Activated T-helper 1 cell treated with anti-CD3 and anti-CD28 coated beads, Interleukin-12 subunit alpha, Interleukin-12 subunit beta, Interleukin-2, Interleukin-4 antibody, amounts not matched to agents 30 ng/mL and 10 ng/mL and 1 ng/mL, durations not matched to agents 14 hours and 24 hours and 36 hours (primary cell): ENCODE measurements at regions of chr1 and their contacts with region 1.

Region 1: GRCh38 chr1:226940029-226940805 is at the start of gene COQ8A:
- DNase-seq: peak; percentile 100
- H3K4me3 Mint-ChIP-seq: peak within 1 kb of the TSS; percentile 89
- H3K27ac Mint-ChIP-seq: peak within 1 kb of the TSS; percentile 97
- H3K4me1 Mint-ChIP-seq: peaks cover 41% of the 10 kb centered on the region
- H3K27me3 Mint-ChIP-seq: no peaks in the 10 kb centered on the region
- total RNA-seq, gene COQ8A: 33.1 and 33.8 TPM in 2 replicates

Region 2: DNA sequence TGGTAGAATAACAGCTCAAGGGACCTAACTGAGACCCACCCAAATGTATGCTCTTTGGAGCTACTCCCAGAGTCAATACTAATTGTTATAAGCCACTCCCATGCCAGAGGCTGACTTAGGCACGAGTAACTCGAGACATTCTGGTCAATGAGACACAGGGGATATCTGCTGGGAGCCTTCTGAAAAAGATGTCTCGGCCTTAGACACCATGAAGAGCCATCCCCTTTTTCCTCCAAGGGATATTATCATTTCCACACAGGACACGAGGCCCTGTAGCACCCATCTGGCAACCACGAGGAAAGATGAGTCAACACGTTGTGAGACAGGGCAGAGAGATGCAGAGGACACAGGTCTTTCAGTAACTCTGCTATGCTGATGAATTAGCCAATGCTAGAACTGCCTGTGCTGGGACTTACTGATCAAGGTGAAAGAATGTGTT is 231.9 kb before region 1 on chr1:
- intact Hi-C with region 1: loop called (anchors 5 kb)
- DNase-seq: no peak
- H3K4me3 Mint-ChIP-seq: peak overlapping the region; percentile 59
- H3K27ac Mint-ChIP-seq: peak overlapping the region; percentile 94
- H3K4me1 Mint-ChIP-seq: peaks cover 72% of the 10 kb centered on the region
- H3K27me3 Mint-ChIP-seq: peaks cover 1% of the 10 kb centered on the region

Region 3: DNA sequence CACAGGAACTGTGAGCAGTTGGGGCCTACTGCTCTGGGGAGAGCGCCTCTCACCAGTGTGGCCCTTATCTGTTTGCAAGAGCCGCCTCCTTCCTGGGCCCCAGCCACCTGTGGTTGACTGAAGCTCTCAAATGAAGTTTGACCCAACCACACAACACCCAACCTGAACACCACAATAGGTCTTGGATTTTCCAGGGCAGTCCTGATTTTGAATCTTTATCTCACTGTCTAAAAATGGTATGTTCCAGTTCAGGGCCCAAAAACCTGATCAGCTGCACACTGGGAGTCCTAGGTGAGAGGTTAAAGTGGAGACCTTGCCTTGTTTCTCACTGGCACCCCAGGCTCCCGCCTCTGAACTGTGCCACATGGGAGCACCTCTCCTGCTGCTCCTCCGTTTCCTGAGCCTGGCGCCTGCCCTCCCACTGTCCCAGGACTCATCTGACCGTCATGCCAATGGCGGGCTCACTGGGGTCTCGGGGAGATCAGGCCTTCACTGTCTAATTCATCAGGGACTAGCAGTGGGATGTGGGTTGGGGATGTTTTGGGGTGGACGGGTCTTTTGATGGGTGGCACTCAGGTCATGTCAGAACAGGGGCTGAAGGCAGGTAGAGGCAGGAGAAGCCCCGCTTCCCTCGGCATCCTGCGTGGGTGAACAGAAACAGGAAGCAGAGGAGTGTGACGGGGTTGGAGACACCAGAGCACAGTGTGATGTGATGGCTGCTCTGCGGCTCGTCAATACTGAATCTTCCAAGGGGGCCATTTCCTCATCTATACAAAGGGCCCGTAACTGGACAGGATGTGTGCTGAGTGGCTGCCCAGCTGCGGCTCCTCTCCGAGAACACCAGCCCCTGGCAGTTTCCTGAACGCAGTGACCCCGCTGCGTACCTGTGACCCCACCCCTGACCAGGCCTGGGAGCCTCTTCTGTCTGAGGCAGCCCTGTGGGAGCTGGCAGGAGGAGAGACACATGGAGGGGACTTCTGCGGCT is 141.5 kb before region 1 on chr1:
- intact Hi-C with region 1: loop called (anchors 1 kb)
- DNase-seq: peak; percentile 63
- H3K4me3 Mint-ChIP-seq: peak overlapping the region; percentile 68
- H3K27ac Mint-ChIP-seq: peak overlapping the region; percentile 88
- H3K4me1 Mint-ChIP-seq: peaks cover 26% of the 10 kb centered on the region
- H3K27me3 Mint-ChIP-seq: peaks cover 16% of the 10 kb centered on the region

Region 4: DNA sequence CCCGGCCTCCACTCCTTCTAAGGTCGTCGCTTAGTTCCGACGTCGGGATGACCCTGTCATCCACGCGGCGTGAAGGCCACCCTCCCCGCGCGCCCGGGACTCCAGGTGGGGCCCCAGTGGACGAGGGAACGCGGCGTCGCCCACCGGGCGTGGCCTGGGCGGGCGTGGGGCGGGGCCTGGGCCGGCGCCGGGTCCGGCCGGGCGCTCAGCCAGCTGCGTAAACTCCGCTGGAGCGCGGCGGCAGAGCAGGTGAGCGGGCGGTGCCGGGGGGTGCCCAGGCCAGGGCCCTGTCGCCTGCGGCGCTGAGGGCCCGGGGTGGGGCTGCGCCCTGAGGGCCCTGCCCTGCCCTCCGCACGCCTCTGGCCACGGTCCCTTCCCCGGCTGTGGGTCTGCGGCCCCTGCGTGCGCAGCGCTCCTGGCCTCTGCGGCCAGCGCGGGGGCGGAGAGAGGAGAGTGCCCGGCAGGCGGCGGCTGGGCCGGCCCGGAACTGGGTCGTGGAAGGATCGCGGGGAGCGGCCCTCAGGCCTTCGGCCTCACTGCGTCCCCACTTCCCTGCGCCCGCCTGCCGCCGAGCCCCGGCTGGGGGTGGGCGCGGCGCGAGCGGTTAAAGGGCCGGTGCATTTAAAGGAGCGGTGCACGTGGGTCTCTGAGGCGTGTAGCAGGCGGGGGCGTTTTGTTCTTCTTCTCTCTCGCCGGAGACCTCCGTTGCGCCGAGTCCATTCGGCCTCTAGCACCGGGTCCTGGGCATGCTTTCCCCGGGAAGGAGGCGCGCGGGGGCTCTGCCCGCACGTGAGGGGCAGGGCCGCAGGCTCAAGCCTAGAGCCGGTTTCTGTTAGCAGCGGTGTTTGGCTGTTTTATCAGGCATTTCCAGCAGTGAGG is 69.6 kb before region 1 on chr1 and contains the start of gene PSEN2:
- intact Hi-C with region 1: loop called (anchors 1 kb)
- DNase-seq: peak; percentile 71
- H3K4me3 Mint-ChIP-seq: peak within 1 kb of the TSS; percentile 81
- H3K27ac Mint-ChIP-seq: peak within 1 kb of the TSS; percentile 55
- H3K4me1 Mint-ChIP-seq: peaks cover 22% of the 10 kb centered on the region
- H3K27me3 Mint-ChIP-seq: peaks cover 26% of the 10 kb centered on the region
- total RNA-seq, gene PSEN2: 13.5 and 14.3 TPM in 2 replicates

Region 5: GRCh38 chr1:226882631-226883409 is 57.4 kb before region 1 on chr1:
- intact Hi-C with region 1: loop called (anchors 1 kb)
- DNase-seq: peak; percentile 40
- H3K4me3 Mint-ChIP-seq: peak overlapping the region; percentile 48
- H3K27ac Mint-ChIP-seq: peak overlapping the region; percentile 87
- H3K4me1 Mint-ChIP-seq: peaks cover 60% of the 10 kb centered on the region
- H3K27me3 Mint-ChIP-seq: no peaks in the 10 kb centered on the region

Region 6: DNA sequence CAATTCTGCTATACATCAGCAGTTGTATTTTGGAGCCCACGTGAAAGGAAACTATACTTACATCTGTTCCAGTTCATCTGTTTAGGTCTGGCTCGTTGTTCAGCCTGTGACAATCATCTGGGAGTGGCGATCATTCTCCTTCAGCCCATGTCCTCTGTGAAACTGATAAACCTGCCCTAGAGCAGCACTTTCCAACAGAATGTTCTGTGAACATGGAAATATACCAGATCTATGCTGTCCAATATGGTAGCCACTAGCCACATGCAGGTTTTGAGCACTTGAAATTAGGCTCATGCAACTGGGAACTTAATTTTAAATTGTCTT is 24.6 kb before region 1 on chr1:
- intact Hi-C with region 1: loop called (anchors 1 kb)
- DNase-seq: no peak
- H3K4me3 Mint-ChIP-seq: no peak overlapping the region
- H3K27ac Mint-ChIP-seq: peak overlapping the region; percentile 7
- H3K4me1 Mint-ChIP-seq: peaks cover 28% of the 10 kb centered on the region
- H3K27me3 Mint-ChIP-seq: no peaks in the 10 kb centered on the region

Region 7: GRCh38 chr1:227072991-227073390 is 132.8 kb after region 1 on chr1:
- intact Hi-C with region 1: loop called (anchors 2 kb)
- DNase-seq: no peak
- H3K4me3 Mint-ChIP-seq: no peak overlapping the region
- H3K27ac Mint-ChIP-seq: no peak overlapping the region
- H3K4me1 Mint-ChIP-seq: peaks cover 6% of the 10 kb centered on the region
- H3K27me3 Mint-ChIP-seq: peaks cover 9% of the 10 kb centered on the region